Ascending aorta (tissue), 2 donors: ENCODE measurements at regions of chr6 and their contacts with region 1.

Region 1: GRCh38 chr6:29705389-29706231 is 17.6 kb upstream of the HLA-F start:
- DNase-seq: no peak
- H3K4me3 ChIP-seq: no peak overlapping the region
- H3K27ac ChIP-seq: no peak overlapping the region
- H3K4me1 ChIP-seq: no peaks in the 10 kb centered on the region
- H3K27me3 ChIP-seq: no peaks in the 10 kb centered on the region
- CTCF ChIP-seq: peak; percentile 54 to 62 (median 60)

Region 2: GRCh38 chr6:29737707-29738630 is 32.4 kb after region 1 on chr6:
- intact Hi-C with region 1: no loop called
- DNase-seq: peak in 1 of 2 donors; percentile 76
- H3K4me3 ChIP-seq: no peak overlapping the region
- H3K27ac ChIP-seq: no peak overlapping the region
- H3K4me1 ChIP-seq: no peaks in the 10 kb centered on the region
- H3K27me3 ChIP-seq: no peaks in the 10 kb centered on the region
- CTCF ChIP-seq: peak; percentile 61 to 72 (median 72)

Region 3: GRCh38 chr6:29953001-29953441 is 247.4 kb after region 1 on chr6:
- intact Hi-C with region 1: no loop called
- DNase-seq: no peak
- H3K4me3 ChIP-seq: no peak overlapping the region
- H3K27ac ChIP-seq: no peak overlapping the region
- H3K4me1 ChIP-seq: no peaks in the 10 kb centered on the region
- H3K27me3 ChIP-seq: no peaks in the 10 kb centered on the region
- CTCF ChIP-seq: no peak

Region 4: GRCh38 chr6:30013291-30013922 is 307.8 kb after region 1 on chr6:
- intact Hi-C with region 1: loop called (anchors 10 kb)
- DNase-seq: no peak
- H3K4me3 ChIP-seq: no peak overlapping the region
- H3K27ac ChIP-seq: no peak overlapping the region
- H3K4me1 ChIP-seq: no peaks in the 10 kb centered on the region
- H3K27me3 ChIP-seq: no peaks in the 10 kb centered on the region
- CTCF ChIP-seq: peak; percentile 27 to 85 (median 49)